H1 (cell line): ENCODE measurements at regions of chr11 and their contacts with region 1.

Region 1: GRCh38 chr11:134098566-134099184 is 29.8 kb downstream of the JAM3 start:
- DNase-seq: no peak
- H3K4me3 ChIP-seq: no peak overlapping the region
- H3K27ac ChIP-seq: no peak overlapping the region
- H3K4me1 ChIP-seq: peaks cover 0 to 4% (median 2%) of the 10 kb centered on the region in 4 experiments; a peak in 3 of 7 replicates
- H3K27me3 ChIP-seq: no peaks in the 10 kb centered on the region
- CTCF ChIP-seq: peak in 2 of 3 experiments; percentile 68 to 75; a peak in 3 of 4 replicates
- EP300 ChIP-seq: no peak
- POLR2A ChIP-seq: no peak
- RAD21 ChIP-seq: peak; percentile 62 to 74

Region 2: GRCh38 chr11:134062265-134063123 is 36.2 kb before region 1 on chr11:
- CTCF ChIA-PET with region 1: interaction called, 16 read pairs
- POLR2A ChIA-PET with region 1: no interaction called
- DNase-seq: peak in 1 of 2 experiments; percentile 40
- H3K4me3 ChIP-seq: no peak overlapping the region
- H3K27ac ChIP-seq: no peak overlapping the region
- H3K4me1 ChIP-seq: peaks cover 0 to 2% (median 0%) of the 10 kb centered on the region in 4 experiments; a peak in 2 of 7 replicates
- H3K27me3 ChIP-seq: no peaks in the 10 kb centered on the region
- CTCF ChIP-seq: no peak
- EP300 ChIP-seq: no peak
- POLR2A ChIP-seq: no peak
- RAD21 ChIP-seq: no peak

Region 3: GRCh38 chr11:134068829-134069425 is 29.7 kb before region 1 on chr11 and contains the start of gene JAM3:
- CTCF ChIA-PET with region 1: interaction called, 23 read pairs
- POLR2A ChIA-PET with region 1: no interaction called
- DNase-seq: peak; percentile 81 to 99
- H3K4me3 ChIP-seq: peak within 1 kb of the TSS; percentile 74 to 97 (median 86)
- H3K27ac ChIP-seq: 0 out of 2 replicates have a peak within 1 kb of the TSS, but pooled peaks have one; percentile 51
- H3K4me1 ChIP-seq: peaks cover 0 to 9% (median 2%) of the 10 kb centered on the region in 4 experiments; a peak in 3 of 7 replicates
- H3K27me3 ChIP-seq: peaks cover 0 to 2% (median 0%) of the 10 kb centered on the region in 4 experiments; a peak in 3 of 7 replicates
- CTCF ChIP-seq: no peak
- EP300 ChIP-seq: no peak
- POLR2A ChIP-seq: no peak; a peak in 1 of 3 replicates
- RAD21 ChIP-seq: no peak
- total RNA-seq, gene JAM3: 40.3 and 42.8 TPM in 2 replicates

Region 4: DNA sequence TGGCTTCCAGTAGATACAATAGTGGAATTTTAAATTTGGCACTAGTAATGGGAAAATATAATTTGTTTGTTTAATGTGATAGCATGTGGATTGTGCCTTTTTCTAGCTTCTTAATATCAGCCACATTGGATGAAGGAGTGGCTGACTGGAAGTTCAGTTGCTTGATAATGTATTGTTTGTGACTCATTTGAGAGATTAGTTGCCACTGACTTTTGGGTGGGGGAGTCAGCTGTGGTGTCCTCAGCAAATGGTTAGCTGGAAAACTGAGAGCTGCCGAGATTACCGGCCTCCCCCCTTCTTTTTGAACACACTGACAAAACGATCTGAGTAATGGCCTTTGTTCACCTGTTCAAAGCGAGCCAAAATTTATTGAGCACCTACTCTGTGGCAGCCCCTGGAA is 24.3 kb before region 1 on chr11:
- CTCF ChIA-PET with region 1: interaction called, 23 read pairs
- POLR2A ChIA-PET with region 1: no interaction called
- DNase-seq: no peak
- H3K4me3 ChIP-seq: no peak overlapping the region
- H3K27ac ChIP-seq: no peak overlapping the region
- H3K4me1 ChIP-seq: peaks cover 0 to 9% (median under 1%) of the 10 kb centered on the region in 4 experiments; a peak in 2 of 7 replicates
- H3K27me3 ChIP-seq: peaks cover 0 to 2% (median 0%) of the 10 kb centered on the region in 4 experiments; a peak in 3 of 7 replicates
- CTCF ChIP-seq: no peak
- EP300 ChIP-seq: no peak
- POLR2A ChIP-seq: no peak
- RAD21 ChIP-seq: no peak

Region 5: GRCh38 chr11:134082990-134083389 is 15.7 kb before region 1 on chr11:
- CTCF ChIA-PET with region 1: interaction called, 14 read pairs
- POLR2A ChIA-PET with region 1: no interaction called
- DNase-seq: no peak
- H3K4me3 ChIP-seq: no peak overlapping the region
- H3K27ac ChIP-seq: no peak overlapping the region
- H3K4me1 ChIP-seq: peaks cover 0 to 1% (median 0%) of the 10 kb centered on the region in 4 experiments; a peak in 1 of 7 replicates
- H3K27me3 ChIP-seq: peaks cover 0 to 1% (median 0%) of the 10 kb centered on the region in 4 experiments; a peak in 1 of 7 replicates
- CTCF ChIP-seq: no peak
- EP300 ChIP-seq: no peak
- POLR2A ChIP-seq: no peak
- RAD21 ChIP-seq: no peak

Region 6: DNA sequence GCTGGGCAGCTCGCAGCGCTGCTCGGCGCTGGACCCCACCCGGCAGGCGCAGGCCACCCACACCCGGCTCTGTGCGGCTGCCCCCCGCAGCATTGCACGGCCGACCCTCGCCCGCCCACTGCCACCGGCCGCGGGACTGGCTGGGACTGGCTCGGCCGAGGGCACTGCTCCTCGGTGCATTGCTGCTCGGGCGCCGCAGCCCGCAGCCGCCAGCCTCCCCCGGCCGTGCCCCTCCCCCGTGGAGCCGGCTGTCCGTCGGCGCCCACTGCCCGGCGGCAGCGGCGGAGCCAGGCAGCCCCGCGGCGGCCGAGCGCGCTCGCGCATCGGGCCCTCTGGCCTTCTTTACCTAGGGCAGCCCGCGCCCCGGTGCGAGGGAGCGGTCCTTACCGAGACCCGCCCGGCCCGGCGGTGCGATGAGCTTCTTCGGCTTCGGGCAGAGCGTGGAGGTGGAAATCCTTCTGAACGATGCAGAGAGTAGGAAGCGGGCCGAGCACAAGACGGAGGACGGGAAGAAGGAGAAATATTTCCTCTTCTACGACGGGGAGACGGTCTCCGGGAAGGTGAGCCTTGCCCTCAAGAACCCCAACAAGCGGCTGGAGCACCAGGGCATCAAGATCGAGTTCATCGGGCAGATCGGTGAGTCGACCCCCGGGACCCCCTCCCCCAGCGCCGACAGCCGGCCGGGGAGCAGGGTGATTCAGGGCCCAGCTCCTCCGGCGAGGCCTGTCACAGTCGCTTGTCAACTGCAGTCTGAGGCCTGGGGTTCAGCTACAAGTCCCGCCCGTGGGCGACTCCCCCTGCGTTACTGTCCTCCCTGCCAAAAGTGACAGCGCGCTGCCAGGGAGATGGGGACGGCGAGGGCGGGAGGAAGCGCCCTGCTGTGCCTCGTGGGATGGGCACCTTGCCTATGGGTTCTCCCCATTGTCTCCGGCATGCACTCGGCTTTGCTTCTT is 126.3 kb after region 1 on chr11:
- CTCF ChIA-PET with region 1: no interaction called
- POLR2A ChIA-PET with region 1: no interaction called
- DNase-seq: no peak
- H3K4me3 ChIP-seq: peak overlapping the region; percentile 75 to 97 (median 86)
- H3K27ac ChIP-seq: no peak overlapping the region
- H3K4me1 ChIP-seq: peaks cover 0 to 5% (median 3%) of the 10 kb centered on the region in 4 experiments
- H3K27me3 ChIP-seq: peaks cover 0 to 6% (median 0%) of the 10 kb centered on the region in 4 experiments; a peak in 1 of 7 replicates
- CTCF ChIP-seq: no peak
- EP300 ChIP-seq: no peak
- POLR2A ChIP-seq: no peak
- RAD21 ChIP-seq: no peak